Mammary epithelial cell (primary cell): ENCODE measurements at regions of chr11 and their contacts with region 1.

Region 1: DNA sequence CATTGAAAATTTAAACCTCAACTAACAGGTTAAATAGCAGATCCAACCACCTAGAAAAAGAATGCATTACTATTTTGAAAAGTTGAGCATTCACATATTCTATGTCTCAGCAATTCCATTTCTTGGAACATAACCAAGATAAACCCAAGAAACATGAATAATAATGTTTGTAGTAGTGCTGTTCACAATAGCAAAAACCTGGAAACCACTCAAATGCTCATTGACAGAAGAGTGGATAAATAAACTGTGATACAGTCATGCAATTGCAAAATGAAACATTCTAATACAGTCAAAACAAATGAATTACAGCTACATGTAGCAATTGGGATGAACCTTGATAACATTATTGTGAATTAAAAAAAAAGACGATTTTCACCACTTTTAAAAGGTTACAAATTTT is 162.8 kb upstream of the TMEM45B start:
- DNase-seq: peak; percentile 79
- H3K4me3 ChIP-seq: no peak overlapping the region
- H3K27ac ChIP-seq: no peak overlapping the region
- H3K4me1 ChIP-seq: no peaks in the 10 kb centered on the region
- H3K27me3 ChIP-seq: no peaks in the 10 kb centered on the region
- CTCF ChIP-seq: no peak

Region 2: DNA sequence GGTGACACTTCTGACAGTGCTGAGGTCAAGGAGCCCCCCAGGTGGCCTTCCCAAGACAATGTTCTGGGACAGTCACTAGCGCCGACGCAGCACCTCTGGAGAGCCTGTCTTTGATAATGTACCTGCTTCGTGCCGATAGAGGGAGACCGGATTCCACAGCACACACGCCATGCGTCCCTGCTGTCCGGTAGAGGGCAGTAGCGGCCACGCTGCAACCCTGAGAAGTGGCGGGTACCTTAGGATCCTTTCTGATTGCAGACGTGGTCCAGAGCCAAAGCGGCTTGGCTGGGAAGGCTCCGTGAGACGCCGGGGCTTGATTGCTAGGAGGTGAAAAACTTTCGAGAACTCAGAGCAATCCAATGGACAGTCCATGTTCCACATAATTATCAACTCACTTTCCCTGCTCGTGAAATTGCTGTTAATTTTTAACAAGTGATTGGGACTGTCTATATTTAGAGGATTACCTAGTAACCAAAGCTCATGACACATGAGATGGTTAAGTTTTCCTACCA is 288.6 kb before region 1 on chr11:
- CTCF ChIA-PET with region 1: no interaction called
- dilution Hi-C with region 1: no loop called
- in situ Hi-C with region 1: no loop called
- intact Hi-C with region 1: loop called (anchors 1 kb)
- DNase-seq: peak; percentile 82
- H3K4me3 ChIP-seq: no peak overlapping the region
- H3K27ac ChIP-seq: no peak overlapping the region
- H3K4me1 ChIP-seq: peaks cover 4% of the 10 kb centered on the region
- H3K27me3 ChIP-seq: peaks cover 21% of the 10 kb centered on the region
- CTCF ChIP-seq: peak; percentile 100

Region 3: GRCh38 chr11:129375751-129376657 is 276.8 kb before region 1 on chr11 and contains the start of gene BARX2:
- CTCF ChIA-PET with region 1: interaction called, 4 read pairs
- dilution Hi-C with region 1: no loop called
- in situ Hi-C with region 1: no loop called
- intact Hi-C with region 1: loop called (anchors 1 kb)
- DNase-seq: peak; percentile 64
- H3K4me3 ChIP-seq: peak within 1 kb of the TSS in 2 of 3 experiments; percentile 25 to 41
- H3K27ac ChIP-seq: no peak within 1 kb of the TSS
- H3K4me1 ChIP-seq: peaks cover 18% of the 10 kb centered on the region
- H3K27me3 ChIP-seq: peaks cover 66% of the 10 kb centered on the region
- CTCF ChIP-seq: peak; percentile 37 to 83
- total RNA-seq, gene BARX2: 0.17 TPM in 1 of 2 donors, not detected in the other

Region 4: GRCh38 chr11:129410395-129410960 is 242.3 kb before region 1 on chr11:
- CTCF ChIA-PET with region 1: no interaction called
- dilution Hi-C with region 1: no loop called
- in situ Hi-C with region 1: no loop called
- intact Hi-C with region 1: loop called (anchors 1 kb)
- DNase-seq: peak; percentile 27
- H3K4me3 ChIP-seq: no peak overlapping the region
- H3K27ac ChIP-seq: no peak overlapping the region
- H3K4me1 ChIP-seq: no peaks in the 10 kb centered on the region
- H3K27me3 ChIP-seq: peaks cover 9% of the 10 kb centered on the region
- CTCF ChIP-seq: peak in 1 of 2 donors; percentile 53

Region 5: DNA sequence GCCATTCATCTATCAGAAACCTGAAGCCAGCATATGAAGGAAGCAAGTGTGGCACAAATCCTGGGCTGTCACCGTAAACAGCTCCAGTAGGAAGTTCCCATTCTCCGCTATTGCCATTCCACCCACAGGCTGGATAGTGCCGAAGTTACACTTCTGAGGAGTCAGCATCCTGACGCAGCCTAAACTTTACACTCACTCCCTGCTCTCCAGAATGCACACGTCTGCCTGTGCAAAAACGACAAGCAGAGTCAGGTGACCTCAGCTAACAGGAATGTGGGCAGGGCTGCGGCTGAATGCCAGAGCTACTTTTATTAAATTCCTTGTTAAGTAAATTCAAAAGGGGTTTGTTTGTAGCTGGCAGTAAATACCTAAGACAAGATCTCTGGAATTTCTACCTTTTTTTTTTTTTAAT is 208.9 kb after region 1 on chr11:
- CTCF ChIA-PET with region 1: no interaction called
- dilution Hi-C with region 1: no loop called
- in situ Hi-C with region 1: no loop called
- intact Hi-C with region 1: no loop called
- DNase-seq: peak; percentile 95
- H3K4me3 ChIP-seq: no peak overlapping the region
- H3K27ac ChIP-seq: peak overlapping the region; percentile 73
- H3K4me1 ChIP-seq: peaks cover 17% of the 10 kb centered on the region
- H3K27me3 ChIP-seq: no peaks in the 10 kb centered on the region
- CTCF ChIP-seq: no peak